Posterior cingulate gyrus (tissue), 11 donors: ENCODE measurements at regions of chr10 and their contacts with region 1.

Region 1: GRCh38 chr10:24771941-24772694 is 48.4 kb upstream of the ARHGAP21 start:
- DNase-seq: no peak

Region 2: GRCh38 chr10:23945845-23946244 is 826.3 kb before region 1 on chr10:
- intact Hi-C with region 1: no loop called
- DNase-seq: no peak

Region 3: GRCh38 chr10:24574161-24574560 is 198.0 kb before region 1 on chr10:
- intact Hi-C with region 1: no loop called
- DNase-seq: no peak

Region 4: GRCh38 chr10:24731942-24732341 is 40.2 kb before region 1 on chr10:
- intact Hi-C with region 1: loop called (anchors 5 kb)
- DNase-seq: no peak